GM12878 (cell line): ENCODE measurements at regions of chr9 and their contacts with region 1.

Region 1: GRCh38 chr9:20170122-20170521 is 381.3 kb upstream of the SLC24A2 start:
- DNase-seq: no peak
- ATAC-seq: no peak
- H3K4me3 ChIP-seq: no peak overlapping the region
- H3K27ac ChIP-seq: no peak overlapping the region
- H3K4me1 ChIP-seq: no peaks in the 10 kb centered on the region
- H3K27me3 ChIP-seq: no peaks in the 10 kb centered on the region
- CTCF ChIP-seq: no peak
- EP300 ChIP-seq: no peak
- POLR2A ChIP-seq: no peak
- RAD21 ChIP-seq: no peak

Region 2: DNA sequence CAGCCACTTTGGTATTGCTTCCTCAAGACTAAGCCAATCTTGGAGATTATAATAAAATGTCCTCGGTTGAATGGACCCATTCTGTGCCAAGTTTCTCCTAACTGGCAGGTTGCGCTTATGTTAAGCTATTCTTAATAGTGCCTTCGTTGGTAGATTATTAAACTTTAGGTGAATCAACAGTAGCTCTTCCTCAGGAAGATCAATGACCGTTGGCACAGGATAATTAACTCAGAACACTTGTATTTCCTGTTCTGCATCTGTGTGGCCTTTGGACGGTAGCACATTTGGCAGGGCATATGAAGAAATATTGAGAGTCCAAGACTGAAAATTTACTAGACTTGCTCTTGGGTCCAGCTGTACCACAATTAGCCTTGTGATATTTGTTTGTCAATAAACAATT is 49.3 kb after region 1 on chr9:
- CTCF ChIA-PET with region 1: no interaction called
- POLR2A ChIA-PET with region 1: no interaction called
- RAD21 ChIA-PET with region 1: no interaction called
- SMC1A ChIA-PET with region 1: no interaction called
- in situ Hi-C with region 1: loop called (anchors 5 kb)
- intact Hi-C with region 1: no loop called
- DNase-seq: no peak
- ATAC-seq: no peak
- H3K4me3 ChIP-seq: no peak overlapping the region
- H3K27ac ChIP-seq: no peak overlapping the region
- H3K4me1 ChIP-seq: no peaks in the 10 kb centered on the region
- H3K27me3 ChIP-seq: no peaks in the 10 kb centered on the region; a peak in 1 of 4 replicates
- CTCF ChIP-seq: no peak
- EP300 ChIP-seq: no peak
- POLR2A ChIP-seq: no peak
- RAD21 ChIP-seq: no peak

Region 3: GRCh38 chr9:20649381-20649780 is 479.3 kb after region 1 on chr9:
- CTCF ChIA-PET with region 1: no interaction called
- POLR2A ChIA-PET with region 1: no interaction called
- RAD21 ChIA-PET with region 1: no interaction called
- SMC1A ChIA-PET with region 1: no interaction called
- in situ Hi-C with region 1: no loop called
- intact Hi-C with region 1: no loop called
- DNase-seq: no peak
- ATAC-seq: no peak
- H3K4me3 ChIP-seq: no peak overlapping the region
- H3K27ac ChIP-seq: no peak overlapping the region
- H3K4me1 ChIP-seq: no peaks in the 10 kb centered on the region
- H3K27me3 ChIP-seq: no peaks in the 10 kb centered on the region
- CTCF ChIP-seq: no peak
- EP300 ChIP-seq: no peak
- POLR2A ChIP-seq: no peak
- RAD21 ChIP-seq: no peak